Endothelial cell of umbilical vein (primary cell): ENCODE measurements at regions of chr4 and their contacts with region 1.

Region 1: GRCh38 chr4:78864405-78865024 is 74.7 kb downstream of the PAQR3 start:
- DNase-seq: peak; percentile 85
- H3K4me3 ChIP-seq: no peak overlapping the region
- H3K27ac ChIP-seq: no peak overlapping the region
- H3K4me1 ChIP-seq: no peaks in the 10 kb centered on the region
- H3K27me3 ChIP-seq: no peaks in the 10 kb centered on the region
- CTCF ChIP-seq: peak; percentile 41 to 42
- POLR2A ChIP-seq: no peak

Region 2: DNA sequence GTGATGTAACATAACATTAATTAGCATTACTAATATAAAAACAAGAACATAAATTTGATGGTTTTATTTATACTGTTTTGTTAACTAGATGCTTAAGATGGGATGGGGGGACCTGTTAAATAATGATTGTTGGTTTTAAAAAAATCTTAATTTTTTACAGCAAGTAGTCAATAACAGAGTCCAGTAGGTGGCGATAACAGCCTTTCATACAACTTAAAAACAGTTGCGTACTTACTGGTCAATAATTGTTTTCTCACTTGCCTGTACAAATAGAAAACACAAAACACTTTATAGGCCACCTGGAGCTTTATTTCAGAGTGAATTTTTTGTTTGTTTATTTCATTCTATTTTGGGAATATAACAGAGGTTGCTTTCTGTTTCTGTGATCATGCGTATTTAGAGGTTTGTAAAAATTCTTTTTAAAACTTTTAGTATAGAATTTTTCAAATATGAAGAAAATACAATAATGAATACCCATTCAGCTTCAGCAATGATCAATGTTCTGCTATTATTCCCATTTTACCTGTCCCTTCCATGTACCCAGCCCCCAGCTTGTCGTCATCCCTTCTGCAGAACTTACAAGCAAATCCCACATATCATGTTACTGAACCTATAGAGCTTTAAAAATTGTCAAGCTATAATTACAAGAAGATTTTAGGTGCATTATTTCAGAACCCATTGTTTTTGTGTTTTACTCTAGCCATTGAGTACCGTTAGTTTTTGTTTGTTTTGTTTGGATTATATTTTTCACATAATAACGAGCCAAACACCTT is 904.8 kb before region 1 on chr4:
- CTCF ChIA-PET with region 1: interaction called, 4 read pairs
- POLR2A ChIA-PET with region 1: no interaction called
- dilution Hi-C with region 1: no loop called
- intact Hi-C with region 1: loop called (anchors 10 kb)
- DNase-seq: peak; percentile 55
- H3K4me3 ChIP-seq: no peak overlapping the region
- H3K27ac ChIP-seq: no peak overlapping the region
- H3K4me1 ChIP-seq: no peaks in the 10 kb centered on the region
- H3K27me3 ChIP-seq: no peaks in the 10 kb centered on the region
- CTCF ChIP-seq: peak; percentile 27 to 45
- POLR2A ChIP-seq: no peak

Region 3: DNA sequence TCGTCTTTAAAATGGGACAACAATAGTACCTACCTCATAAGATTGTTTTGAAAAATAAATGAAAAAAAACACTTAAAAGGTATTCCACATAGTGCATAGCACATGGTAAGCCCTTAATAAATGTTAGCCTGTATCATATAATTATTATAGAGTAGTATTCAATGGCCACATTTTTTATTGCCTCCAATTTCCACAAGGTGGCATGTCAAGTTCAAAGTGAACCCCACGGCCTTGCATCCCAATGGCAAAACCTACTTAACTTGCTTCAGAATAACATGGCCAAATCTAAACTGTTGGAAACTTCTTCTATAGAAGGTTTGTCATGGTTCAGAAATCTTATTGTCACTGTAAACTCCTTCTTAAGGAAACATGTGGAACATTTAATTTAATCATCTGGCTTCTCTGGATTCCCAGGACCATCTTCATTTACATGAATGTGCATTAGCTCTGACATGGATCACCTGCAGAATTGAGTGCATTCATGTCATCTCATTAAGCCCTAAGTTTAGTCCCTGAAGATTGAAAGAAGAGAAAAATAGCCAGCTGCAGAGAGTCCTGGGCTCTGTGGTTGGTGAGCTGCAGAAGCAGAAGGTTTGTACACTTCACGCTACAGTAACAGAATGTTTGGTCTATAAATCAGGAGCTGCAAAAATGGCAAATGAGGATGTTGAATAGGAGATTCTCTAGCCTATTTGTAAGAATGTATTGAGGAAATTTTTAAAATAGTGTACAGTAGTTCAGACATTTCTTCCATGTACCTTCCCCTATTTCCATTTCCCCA is 251.9 kb before region 1 on chr4:
- CTCF ChIA-PET with region 1: interaction called, 129 read pairs
- POLR2A ChIA-PET with region 1: no interaction called
- dilution Hi-C with region 1: loop called (anchors 25 kb)
- intact Hi-C with region 1: loop called (anchors 1 kb)
- DNase-seq: peak; percentile 62
- H3K4me3 ChIP-seq: no peak overlapping the region
- H3K27ac ChIP-seq: no peak overlapping the region
- H3K4me1 ChIP-seq: no peaks in the 10 kb centered on the region
- H3K27me3 ChIP-seq: no peaks in the 10 kb centered on the region
- CTCF ChIP-seq: peak; percentile 45 to 46
- POLR2A ChIP-seq: no peak

Region 4: GRCh38 chr4:78622253-78622979 is 242.1 kb before region 1 on chr4:
- CTCF ChIA-PET with region 1: interaction called, 129 read pairs
- POLR2A ChIA-PET with region 1: no interaction called
- dilution Hi-C with region 1: loop called (anchors 25 kb)
- intact Hi-C with region 1: no loop called
- DNase-seq: peak; percentile 65
- H3K4me3 ChIP-seq: no peak overlapping the region
- H3K27ac ChIP-seq: no peak overlapping the region
- H3K4me1 ChIP-seq: peaks cover 9% of the 10 kb centered on the region
- H3K27me3 ChIP-seq: no peaks in the 10 kb centered on the region
- CTCF ChIP-seq: no peak
- POLR2A ChIP-seq: no peak

Region 5: DNA sequence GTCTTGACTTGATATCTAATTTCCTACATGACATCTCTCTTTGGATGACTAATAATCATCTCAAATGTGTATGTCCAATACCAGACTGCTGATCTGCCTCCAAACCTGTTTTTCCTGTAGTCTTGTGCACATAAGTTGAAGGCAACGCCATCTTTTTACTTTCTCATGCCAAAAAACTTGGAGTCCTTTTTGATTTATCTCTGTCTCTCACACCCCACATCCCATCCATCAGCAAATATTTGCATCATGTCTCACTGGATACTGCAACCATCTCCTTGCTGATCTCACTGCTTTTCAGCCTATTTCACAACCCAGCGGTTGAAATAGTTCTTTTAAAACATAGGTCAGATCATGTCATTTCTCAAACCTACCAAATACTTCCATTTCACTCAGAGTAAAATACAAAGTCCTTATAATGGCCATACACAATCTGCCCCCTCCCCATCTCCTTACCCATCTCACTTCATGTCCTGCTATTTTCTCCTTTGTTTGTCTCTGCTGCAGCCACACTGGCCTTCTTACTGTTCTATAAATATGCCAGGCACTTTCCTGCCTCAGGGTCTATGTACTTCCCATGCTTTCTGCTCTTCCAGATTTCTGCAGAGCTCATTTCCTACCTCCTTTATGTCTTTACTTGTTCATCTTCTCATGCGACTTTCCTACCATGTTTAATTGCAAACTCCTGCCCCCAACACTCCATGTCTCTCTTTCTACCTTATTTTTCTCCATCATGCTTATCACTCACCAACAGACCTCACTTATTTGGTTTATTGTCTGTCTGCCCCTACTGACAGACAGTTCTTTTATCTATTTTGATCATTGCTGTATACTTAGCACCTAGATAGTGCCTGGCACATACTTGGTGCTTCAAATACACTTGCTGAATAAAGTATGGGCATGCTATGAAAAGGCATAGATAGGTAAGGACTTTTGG is 214.2 kb before region 1 on chr4:
- CTCF ChIA-PET with region 1: interaction called, 53 read pairs
- POLR2A ChIA-PET with region 1: no interaction called
- dilution Hi-C with region 1: no loop called
- intact Hi-C with region 1: no loop called
- DNase-seq: no peak
- H3K4me3 ChIP-seq: no peak overlapping the region
- H3K27ac ChIP-seq: no peak overlapping the region
- H3K4me1 ChIP-seq: peaks cover 47% of the 10 kb centered on the region
- H3K27me3 ChIP-seq: no peaks in the 10 kb centered on the region
- CTCF ChIP-seq: no peak
- POLR2A ChIP-seq: no peak

Region 6: GRCh38 chr4:78775303-78776030 is 89.0 kb before region 1 on chr4:
- CTCF ChIA-PET with region 1: interaction called, 5 read pairs
- POLR2A ChIA-PET with region 1: no interaction called
- dilution Hi-C with region 1: no loop called
- intact Hi-C with region 1: loop called (anchors 5 kb)
- DNase-seq: peak; percentile 77
- H3K4me3 ChIP-seq: peak overlapping the region; percentile 77 to 91 (median 88)
- H3K27ac ChIP-seq: peak overlapping the region; percentile 97
- H3K4me1 ChIP-seq: peaks cover 24% of the 10 kb centered on the region
- H3K27me3 ChIP-seq: no peaks in the 10 kb centered on the region
- CTCF ChIP-seq: no peak
- POLR2A ChIP-seq: peak; percentile 82